Panc1 (cell line): ENCODE measurements at regions of chrX and their contacts with region 1.

Region 1: DNA sequence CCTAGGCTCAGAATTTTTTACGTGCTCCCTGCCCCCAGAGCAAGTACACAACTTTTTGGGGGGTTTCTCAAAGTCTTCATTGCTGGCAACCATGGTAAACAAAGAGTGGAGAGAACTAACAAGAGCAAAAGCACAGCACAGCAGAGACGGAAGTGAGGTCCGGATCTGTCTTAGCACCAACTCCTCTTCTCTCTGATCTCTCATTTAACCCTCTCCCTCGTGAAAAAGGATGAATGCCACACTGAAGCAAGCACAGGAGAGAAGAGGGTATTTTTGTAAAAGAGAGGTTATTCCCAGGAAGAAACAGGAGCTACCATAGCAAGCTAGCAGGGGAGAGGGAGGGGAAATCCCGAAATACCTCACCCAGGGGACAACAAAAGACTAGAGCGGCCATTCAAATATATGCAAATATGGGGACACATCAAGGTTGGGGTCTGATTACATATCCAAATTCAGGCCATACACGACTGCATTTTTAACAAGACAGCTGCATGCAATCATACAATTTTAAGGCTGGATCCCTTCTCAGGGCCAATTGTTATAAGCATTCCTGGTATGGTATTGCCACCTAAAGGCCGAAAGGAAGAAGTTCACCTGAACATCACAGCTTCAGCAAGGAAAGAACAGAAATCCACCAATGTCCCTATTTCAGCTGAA is 46.6 kb downstream of the CD40LG start:
- DNase-seq: no peak
- ATAC-seq: peak; percentile 81; the same call in 1 of the 2 replicates
- H3K4me3 ChIP-seq: no peak overlapping the region
- H3K27ac ChIP-seq: no peak overlapping the region
- H3K4me1 ChIP-seq: peaks cover 3% of the 10 kb centered on the region
- H3K27me3 ChIP-seq: no peaks in the 10 kb centered on the region
- CTCF ChIP-seq: peak; percentile 75

Region 2: DNA sequence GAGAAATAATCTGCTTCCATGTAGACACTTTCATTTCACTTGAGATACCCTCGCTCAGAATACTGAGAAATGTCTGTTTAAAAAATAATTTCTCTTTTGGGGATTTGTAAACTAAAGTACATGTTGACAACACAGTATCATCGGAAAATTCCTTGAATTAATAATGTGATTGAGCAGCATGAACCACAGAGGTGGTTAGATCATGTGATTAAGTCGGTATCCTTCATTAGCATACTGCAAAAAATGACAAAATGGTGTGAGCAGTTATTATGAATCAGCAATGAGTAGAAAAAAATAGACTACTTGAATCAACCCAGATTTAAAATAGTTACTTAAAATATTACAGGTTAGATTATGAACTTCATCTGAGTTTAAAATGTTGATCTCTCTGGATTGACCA is 457.5 kb before region 1 on chrX:
- CTCF ChIA-PET with region 1: no interaction called
- POLR2A ChIA-PET with region 1: no interaction called
- in situ Hi-C with region 1: no loop called
- intact Hi-C with region 1: loop called (anchors 10 kb)
- DNase-seq: no peak
- ATAC-seq: no peak
- H3K4me3 ChIP-seq: no peak overlapping the region
- H3K27ac ChIP-seq: no peak overlapping the region
- H3K4me1 ChIP-seq: no peaks in the 10 kb centered on the region
- H3K27me3 ChIP-seq: no peaks in the 10 kb centered on the region
- CTCF ChIP-seq: no peak

Region 3: GRCh38 chrX:136525738-136526606 is 168.6 kb before region 1 on chrX:
- CTCF ChIA-PET with region 1: no interaction called
- POLR2A ChIA-PET with region 1: no interaction called
- in situ Hi-C with region 1: no loop called
- intact Hi-C with region 1: loop called (anchors 10 kb)
- DNase-seq: peak; percentile 22
- ATAC-seq: peak; percentile 95
- H3K4me3 ChIP-seq: no peak overlapping the region
- H3K27ac ChIP-seq: 0 out of 2 replicates have a peak overlapping the region, but pooled peaks have one; percentile 23
- H3K4me1 ChIP-seq: peaks cover 10% of the 10 kb centered on the region
- H3K27me3 ChIP-seq: no peaks in the 10 kb centered on the region
- CTCF ChIP-seq: no peak

Region 4: GRCh38 chrX:136608295-136609171 is 86.0 kb before region 1 on chrX:
- CTCF ChIA-PET with region 1: no interaction called
- POLR2A ChIA-PET with region 1: no interaction called
- in situ Hi-C with region 1: no loop called
- intact Hi-C with region 1: loop called (anchors 2 kb)
- DNase-seq: no peak
- ATAC-seq: peak; percentile 81
- H3K4me3 ChIP-seq: no peak overlapping the region
- H3K27ac ChIP-seq: no peak overlapping the region
- H3K4me1 ChIP-seq: no peaks in the 10 kb centered on the region
- H3K27me3 ChIP-seq: no peaks in the 10 kb centered on the region
- CTCF ChIP-seq: peak; percentile 48

Region 5: DNA sequence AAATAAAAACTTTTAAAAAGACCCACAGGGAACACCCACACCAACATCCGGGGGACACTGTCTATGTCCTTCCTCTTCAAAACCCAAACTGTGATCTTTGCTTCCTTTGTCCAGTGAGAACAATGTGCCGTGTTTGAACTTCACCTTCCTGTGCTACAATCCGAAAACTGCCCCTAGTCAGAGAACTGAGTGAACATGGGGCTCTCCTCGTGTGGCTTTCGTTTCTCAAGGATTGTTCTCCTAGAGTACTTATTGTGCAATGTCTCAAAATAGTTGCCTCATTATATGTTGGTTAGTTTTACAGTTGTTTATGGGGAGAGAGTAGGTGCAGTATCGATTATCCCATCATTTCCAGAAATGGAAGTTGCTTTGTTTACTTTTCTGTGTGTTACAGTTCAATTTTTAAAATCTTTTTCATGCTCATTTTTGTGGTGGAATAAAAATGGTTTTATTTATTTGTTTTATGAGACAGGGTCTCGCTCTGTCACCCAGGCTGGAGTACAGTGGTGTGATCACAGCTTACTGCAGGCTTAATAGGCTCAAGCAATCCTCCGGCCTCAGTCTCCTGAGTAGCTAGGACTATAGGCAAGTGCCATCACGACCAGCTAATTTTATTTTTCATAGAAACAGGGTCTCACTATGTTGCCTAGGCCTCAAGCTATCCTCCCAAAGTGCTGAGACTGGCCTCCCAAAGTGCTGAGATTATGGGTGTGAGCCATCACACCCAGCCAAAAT is 156.0 kb after region 1 on chrX:
- CTCF ChIA-PET with region 1: no interaction called
- POLR2A ChIA-PET with region 1: no interaction called
- in situ Hi-C with region 1: no loop called
- intact Hi-C with region 1: no loop called
- DNase-seq: no peak
- ATAC-seq: no peak
- H3K4me3 ChIP-seq: no peak overlapping the region
- H3K27ac ChIP-seq: peak overlapping the region; percentile 19; the same call in 1 of the 2 replicates
- H3K4me1 ChIP-seq: no peaks in the 10 kb centered on the region
- H3K27me3 ChIP-seq: no peaks in the 10 kb centered on the region
- CTCF ChIP-seq: no peak